CD8-positive, alpha-beta T cell (primary cell): ENCODE measurements at regions of chr20 and their contacts with region 1.

Region 1: GRCh38 chr20:35664544-35665221 is at the starts of genes CPNE1 and RBM12:
- DNase-seq: peak; percentile 86 to 97 (median 93)
- ATAC-seq: peak; percentile 67
- H3K4me3 ChIP-seq: peak within 1 kb of the TSS; percentile 60 to 87
- H3K4me3 Mint-ChIP-seq: peak within 1 kb of the TSS; percentile 87
- H3K27ac ChIP-seq: peak within 1 kb of the TSS; percentile 95 to 98
- H3K27ac Mint-ChIP-seq: peak within 1 kb of the TSS; percentile 98
- H3K4me1 ChIP-seq: peaks cover 29% of the 10 kb centered on the region
- H3K4me1 Mint-ChIP-seq: peaks cover 43% of the 10 kb centered on the region
- H3K27me3 ChIP-seq: no peaks in the 10 kb centered on the region
- H3K27me3 Mint-ChIP-seq: no peaks in the 10 kb centered on the region
- CTCF ChIP-seq: no peak
- total RNA-seq, gene CPNE1: 124 to 129 TPM
- total RNA-seq, gene RBM12: 97.4 to 102 TPM

Region 2: GRCh38 chr20:35454881-35455609 is 209.6 kb before region 1 on chr20 and contains the start of gene CEP250:
- CTCF ChIA-PET with region 1: no interaction called
- POLR2A ChIA-PET with region 1: interaction called, 6 read pairs
- intact Hi-C with region 1: loop called in 1 of 2 experiments (anchors 10 kb)
- DNase-seq: peak; percentile 86 to 96 (median 95)
- ATAC-seq: peak; percentile 98
- H3K4me3 ChIP-seq: peak within 1 kb of the TSS; percentile 62 to 94
- H3K4me3 Mint-ChIP-seq: peak within 1 kb of the TSS; percentile 94
- H3K27ac ChIP-seq: peak within 1 kb of the TSS; percentile 52 to 94
- H3K27ac Mint-ChIP-seq: peak within 1 kb of the TSS; percentile 97
- H3K4me1 ChIP-seq: peaks cover 10% of the 10 kb centered on the region
- H3K4me1 Mint-ChIP-seq: peaks cover 21% of the 10 kb centered on the region
- H3K27me3 ChIP-seq: no peaks in the 10 kb centered on the region
- H3K27me3 Mint-ChIP-seq: no peaks in the 10 kb centered on the region
- CTCF ChIP-seq: no peak
- total RNA-seq, gene CEP250: 33.4 to 34.4 TPM

Region 3: DNA sequence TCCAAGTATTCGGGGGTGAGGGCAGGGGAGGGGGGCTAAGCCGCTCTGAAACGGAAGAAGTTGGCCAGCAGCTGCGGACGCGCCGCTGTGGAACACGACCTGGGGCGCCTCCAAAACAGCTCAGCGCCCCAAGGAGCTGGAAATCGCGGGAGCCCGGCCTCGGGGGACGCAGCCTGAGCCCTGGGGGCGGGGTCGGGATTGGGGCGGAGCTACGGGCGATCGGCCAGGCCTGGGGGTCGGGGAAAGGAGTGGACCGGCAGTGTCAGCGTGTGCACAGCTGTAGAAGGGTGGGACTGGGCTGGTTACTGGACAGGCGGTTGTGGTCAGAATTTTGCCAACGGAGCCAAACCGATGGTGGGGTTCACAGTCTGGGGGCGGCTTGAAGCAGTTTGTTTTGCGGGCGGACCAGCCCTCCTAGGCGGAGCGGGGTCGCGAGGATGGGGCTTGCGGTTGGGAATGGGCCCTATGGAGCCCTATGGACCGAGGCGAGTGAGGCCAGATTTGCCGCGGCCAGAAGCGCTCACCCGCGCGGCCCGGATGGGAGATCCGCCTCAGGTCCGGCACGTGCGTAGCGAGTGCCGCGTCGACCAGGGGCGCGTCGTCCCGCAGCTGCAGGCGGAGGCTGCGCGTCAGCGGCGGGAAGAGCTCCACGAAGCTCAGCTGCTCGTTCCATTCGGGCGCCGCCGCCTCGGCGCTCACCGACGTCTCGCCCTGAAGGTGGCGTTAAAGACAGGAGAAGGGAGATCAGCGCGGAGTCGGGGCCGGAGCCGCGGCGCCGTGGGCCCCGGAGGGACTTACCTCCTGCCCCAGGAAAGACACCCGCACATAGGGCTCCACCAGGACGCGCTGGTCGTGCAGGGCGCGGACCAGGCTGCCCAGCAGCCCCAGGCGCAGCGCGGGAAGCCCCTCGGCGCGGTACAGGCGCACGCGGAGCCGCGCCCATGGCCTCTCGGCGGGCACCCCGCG is 63.4 kb before region 1 on chr20:
- CTCF ChIA-PET with region 1: interaction called, 3 read pairs
- POLR2A ChIA-PET with region 1: interaction called, 3 read pairs
- intact Hi-C with region 1: loop called in 1 of 2 experiments (anchors 5 kb)
- DNase-seq: peak; percentile 59 to 90 (median 83)
- ATAC-seq: peak; percentile 92
- H3K4me3 ChIP-seq: peak overlapping the region; percentile 58 to 59
- H3K4me3 Mint-ChIP-seq: peak overlapping the region; percentile 82
- H3K27ac ChIP-seq: no peak overlapping the region
- H3K27ac Mint-ChIP-seq: no peak overlapping the region
- H3K4me1 ChIP-seq: peaks cover 16% of the 10 kb centered on the region
- H3K4me1 Mint-ChIP-seq: peaks cover 11% of the 10 kb centered on the region
- H3K27me3 ChIP-seq: peaks cover 5 to 8% of the 10 kb centered on the region in 2 experiments
- H3K27me3 Mint-ChIP-seq: peaks cover 14% of the 10 kb centered on the region
- CTCF ChIP-seq: peak; percentile 66

Region 4: GRCh38 chr20:35680452-35681183 is 15.9 kb after region 1 on chr20:
- CTCF ChIA-PET with region 1: interaction called, 3 read pairs
- POLR2A ChIA-PET with region 1: interaction called, 10 read pairs
- intact Hi-C with region 1: no loop called
- DNase-seq: no peak
- ATAC-seq: no peak
- H3K4me3 ChIP-seq: no peak overlapping the region
- H3K4me3 Mint-ChIP-seq: no peak overlapping the region
- H3K27ac ChIP-seq: no peak overlapping the region
- H3K27ac Mint-ChIP-seq: no peak overlapping the region
- H3K4me1 ChIP-seq: no peaks in the 10 kb centered on the region
- H3K4me1 Mint-ChIP-seq: no peaks in the 10 kb centered on the region
- H3K27me3 ChIP-seq: no peaks in the 10 kb centered on the region
- H3K27me3 Mint-ChIP-seq: no peaks in the 10 kb centered on the region
- CTCF ChIP-seq: no peak

Region 5: GRCh38 chr20:35741892-35742740 is 77.4 kb after region 1 on chr20 and contains the start of gene RBM39:
- CTCF ChIA-PET with region 1: interaction called, 3 read pairs
- POLR2A ChIA-PET with region 1: interaction called, 20 read pairs
- intact Hi-C with region 1: loop called (anchors 1 kb)
- DNase-seq: peak; percentile 97 to 100 (median 99)
- ATAC-seq: peak; percentile 81
- H3K4me3 ChIP-seq: peak within 1 kb of the TSS; percentile 87 to 98
- H3K4me3 Mint-ChIP-seq: peak within 1 kb of the TSS; percentile 96
- H3K27ac ChIP-seq: peak within 1 kb of the TSS; percentile 99 to 100
- H3K27ac Mint-ChIP-seq: peak within 1 kb of the TSS; percentile 100
- H3K4me1 ChIP-seq: peaks cover 44% of the 10 kb centered on the region
- H3K4me1 Mint-ChIP-seq: peaks cover 47% of the 10 kb centered on the region
- H3K27me3 ChIP-seq: no peaks in the 10 kb centered on the region
- H3K27me3 Mint-ChIP-seq: no peaks in the 10 kb centered on the region
- CTCF ChIP-seq: peak; percentile 44
- total RNA-seq, gene RBM39: 1,168 to 1,202 TPM

Region 6: DNA sequence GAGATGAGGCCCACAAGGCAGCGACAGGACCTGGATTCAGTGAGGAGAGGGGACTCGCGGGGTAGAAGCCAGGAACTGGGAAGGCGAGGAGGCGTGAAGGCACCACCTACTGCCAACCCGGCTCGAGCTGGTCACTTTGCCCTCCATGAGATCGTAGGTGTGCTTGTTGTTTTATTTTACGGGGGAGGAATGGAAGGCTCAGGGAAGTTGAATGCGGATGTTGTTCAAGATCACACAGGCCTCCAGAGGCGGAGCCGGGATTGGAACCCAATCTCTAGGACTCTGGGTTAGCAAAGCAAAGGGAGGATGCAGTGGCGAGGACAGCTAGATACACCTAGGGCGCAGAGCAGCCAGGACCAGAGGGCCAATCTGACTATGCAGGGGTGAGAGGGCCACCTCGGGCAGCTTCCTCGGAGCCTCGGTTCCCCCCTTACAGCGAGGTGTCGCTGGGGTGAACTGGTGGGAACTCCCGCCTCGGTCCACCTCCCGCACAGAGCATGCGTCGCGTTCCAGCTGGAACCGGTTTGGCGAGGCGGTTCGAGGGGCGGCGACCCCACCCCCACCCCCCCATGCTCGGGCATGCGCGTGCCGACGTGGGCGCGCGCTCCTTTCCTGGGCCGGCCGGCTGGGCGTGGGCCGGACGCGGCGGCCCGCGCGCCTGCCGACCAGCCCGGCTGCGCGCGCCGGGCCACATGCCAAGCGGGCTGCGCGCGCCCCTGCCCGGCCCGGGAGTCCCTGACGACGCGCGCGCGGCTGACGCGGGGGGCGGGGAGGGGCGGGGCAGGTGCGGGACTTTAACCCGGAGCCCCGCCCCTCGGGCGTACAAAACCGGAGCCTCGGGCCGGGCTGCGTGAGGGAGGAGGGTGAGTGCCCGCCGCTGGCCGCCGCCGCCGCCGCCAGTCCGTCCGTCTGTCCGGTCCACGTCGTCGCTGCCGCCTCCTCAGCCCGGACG is 796.2 kb after region 1 on chr20:
- CTCF ChIA-PET with region 1: no interaction called
- POLR2A ChIA-PET with region 1: no interaction called
- intact Hi-C with region 1: loop called in 1 of 2 experiments (anchors 10 kb)
- DNase-seq: peak; percentile 78 to 97 (median 89)
- ATAC-seq: peak; percentile 83
- H3K4me3 ChIP-seq: peak overlapping the region; percentile 47 to 52
- H3K4me3 Mint-ChIP-seq: peak overlapping the region; percentile 80
- H3K27ac ChIP-seq: peak overlapping the region; percentile 69 to 90
- H3K27ac Mint-ChIP-seq: peak overlapping the region; percentile 89
- H3K4me1 ChIP-seq: peaks cover 45% of the 10 kb centered on the region
- H3K4me1 Mint-ChIP-seq: peaks cover 44% of the 10 kb centered on the region
- H3K27me3 ChIP-seq: no peaks in the 10 kb centered on the region
- H3K27me3 Mint-ChIP-seq: no peaks in the 10 kb centered on the region
- CTCF ChIP-seq: no peak